Mucosa of descending colon (tissue), 3 donors: ENCODE measurements at regions of chr10 and their contacts with region 1.

Region 1: DNA sequence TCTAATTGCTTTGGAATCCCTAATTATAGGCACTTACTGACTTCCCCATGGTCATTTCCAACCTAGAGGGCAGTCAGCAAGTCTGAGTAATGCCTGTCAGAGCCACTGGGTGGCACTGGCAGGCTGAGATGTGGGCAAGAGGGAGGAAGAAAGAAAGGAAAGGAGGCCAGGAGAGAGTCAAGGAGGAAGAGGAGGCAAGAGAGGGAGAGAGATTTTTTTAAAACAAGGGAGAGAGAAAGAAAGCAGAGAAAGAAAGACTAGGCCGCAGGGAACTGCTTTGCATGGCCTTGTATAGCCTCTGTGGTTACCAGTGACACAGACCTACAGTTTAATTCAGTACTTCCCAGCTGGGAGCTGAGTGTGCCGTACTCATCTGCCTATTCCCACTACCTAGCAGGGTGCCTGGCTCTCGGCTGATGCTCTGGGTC is 210.4 kb upstream of the ADO start:
- DNase-seq: peak in 2 of 3 donors; percentile 74 to 77
- ATAC-seq: peak; percentile 88
- H3K4me3 ChIP-seq: no peak overlapping the region
- H3K4me1 ChIP-seq: no peaks in the 10 kb centered on the region
- CTCF ChIP-seq: peak; percentile 76

Region 2: GRCh38 chr10:62816331-62817120 is 222.4 kb after region 1 on chr10 and contains the start of gene EGR2:
- intact Hi-C with region 1: loop called in 1 of 2 experiments (anchors 10 kb)
- DNase-seq: peak; percentile 93 to 96 (median 95)
- ATAC-seq: peak; percentile 88
- H3K4me3 ChIP-seq: peak within 1 kb of the TSS; percentile 92
- H3K4me1 ChIP-seq: peaks cover 27% of the 10 kb centered on the region
- CTCF ChIP-seq: no peak
- total RNA-seq, gene EGR2: 0.36 to 5.5 (median 0.75) TPM

Region 3: GRCh38 chr10:63083904-63084689 is 490.0 kb after region 1 on chr10:
- intact Hi-C with region 1: loop called in 1 of 2 experiments (anchors 5 kb)
- DNase-seq: peak in 1 of 3 donors; percentile 53
- ATAC-seq: peak; percentile 68
- H3K4me3 ChIP-seq: no peak overlapping the region
- H3K4me1 ChIP-seq: no peaks in the 10 kb centered on the region
- CTCF ChIP-seq: peak; percentile 31

Region 4: GRCh38 chr10:63157845-63158624 is 563.9 kb after region 1 on chr10:
- intact Hi-C with region 1: loop called in 1 of 2 experiments (anchors 10 kb)
- DNase-seq: peak in 1 of 3 donors; percentile 17
- ATAC-seq: peak; percentile 76
- H3K4me3 ChIP-seq: no peak overlapping the region
- H3K4me1 ChIP-seq: peaks cover 20% of the 10 kb centered on the region
- CTCF ChIP-seq: peak; percentile 43